ENCODE measurements at regions of chr9 and their contacts with region 1.

Region 1: GRCh38 chr9:134099123-134099787 is 31.4 kb upstream of the BRD3 start:
- DNase-seq: peak; percentile 44 to 67 (median 54)
- H3K4me3 ChIP-seq: no peak overlapping the region
- H3K4me3 Mint-ChIP-seq: peak overlapping the region in 1 of 2 donors; percentile 35
- H3K27ac ChIP-seq: no peak overlapping the region
- H3K27ac Mint-ChIP-seq: peak overlapping the region in 1 of 7 donors; percentile 54
- H3K4me1 ChIP-seq: peaks cover 0 to 6% of the 10 kb centered on the region in 2 donors
- H3K4me1 Mint-ChIP-seq: peaks cover 7% of the 10 kb centered on the region
- H3K27me3 ChIP-seq: no peaks in the 10 kb centered on the region
- H3K27me3 Mint-ChIP-seq: peaks cover 12 to 16% (median 14%) of the 10 kb centered on the region in 3 donors
- CTCF ChIP-seq: peak; percentile 91

Region 2: GRCh38 chr9:133067821-133068220 is 1031.4 kb before region 1 on chr9:
- intact Hi-C with region 1: no loop called
- DNase-seq: no peak
- H3K4me3 ChIP-seq: no peak overlapping the region
- H3K4me3 Mint-ChIP-seq: no peak overlapping the region
- H3K27ac ChIP-seq: no peak overlapping the region
- H3K27ac Mint-ChIP-seq: peak overlapping the region in 1 of 7 donors; percentile 20
- H3K4me1 ChIP-seq: no peaks in the 10 kb centered on the region
- H3K4me1 Mint-ChIP-seq: no peaks in the 10 kb centered on the region
- H3K27me3 ChIP-seq: no peaks in the 10 kb centered on the region
- H3K27me3 Mint-ChIP-seq: peaks cover 0 to 1% (median 0%) of the 10 kb centered on the region in 3 donors
- CTCF ChIP-seq: no peak

Region 3: GRCh38 chr9:133782157-133783130 is 316.8 kb before region 1 on chr9:
- intact Hi-C with region 1: loop called in 1 of 2 experiments (anchors 5 kb)
- DNase-seq: peak; percentile 61 to 63 (median 63)
- H3K4me3 ChIP-seq: no peak overlapping the region
- H3K4me3 Mint-ChIP-seq: no peak overlapping the region
- H3K27ac ChIP-seq: no peak overlapping the region
- H3K27ac Mint-ChIP-seq: peak overlapping the region in 2 of 7 donors; percentile 15 to 24
- H3K4me1 ChIP-seq: peaks cover 29 to 39% of the 10 kb centered on the region in 2 donors
- H3K4me1 Mint-ChIP-seq: peaks cover 40% of the 10 kb centered on the region
- H3K27me3 ChIP-seq: no peaks in the 10 kb centered on the region
- H3K27me3 Mint-ChIP-seq: peaks cover 0 to 2% (median 2%) of the 10 kb centered on the region in 3 donors
- CTCF ChIP-seq: peak; percentile 79

Region 4: DNA sequence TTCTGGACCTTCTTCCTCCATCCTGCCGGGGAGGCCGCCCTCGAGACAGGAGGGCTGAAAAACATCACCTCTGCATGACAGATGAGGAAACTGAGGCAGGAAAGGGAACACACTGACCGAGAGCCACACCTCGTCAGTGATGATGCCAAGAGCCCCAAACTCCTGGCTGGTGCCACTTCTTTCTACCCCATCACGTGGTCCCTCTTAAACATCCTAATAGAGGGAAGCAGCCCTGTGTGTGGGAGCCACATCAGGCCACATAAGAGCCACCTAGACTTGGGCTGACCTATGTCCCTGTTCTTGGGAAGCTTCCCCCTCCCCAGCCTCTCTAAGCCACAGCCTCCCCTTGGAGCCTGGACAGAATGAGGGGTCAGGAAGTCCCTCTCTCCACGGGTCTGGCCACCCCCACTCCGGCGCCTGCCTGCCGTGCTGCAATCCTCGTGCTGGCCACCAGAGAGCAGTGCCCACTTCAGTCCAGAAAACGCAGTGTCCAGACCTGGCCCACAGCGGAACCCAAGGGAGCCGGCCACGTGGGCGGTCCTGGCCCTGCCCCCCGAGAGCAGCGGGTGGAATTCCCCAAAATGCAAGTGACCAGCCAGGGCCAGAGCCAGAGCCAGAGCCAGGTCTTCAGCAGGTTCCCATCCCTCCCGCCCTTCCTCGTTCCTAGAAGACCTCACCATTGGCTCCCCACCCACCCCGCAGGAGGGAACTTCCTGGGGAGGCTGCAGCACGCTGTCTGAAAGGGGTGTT is 306.4 kb before region 1 on chr9:
- intact Hi-C with region 1: loop called in 1 of 2 experiments (anchors 5 kb)
- DNase-seq: peak; percentile 83 to 95 (median 87)
- H3K4me3 ChIP-seq: peak overlapping the region in 2 of 3 experiments; percentile 14 to 52
- H3K4me3 Mint-ChIP-seq: peak overlapping the region; percentile 58 to 75
- H3K27ac ChIP-seq: peak overlapping the region; percentile 1 to 53
- H3K27ac Mint-ChIP-seq: peak overlapping the region; percentile 30 to 90 (median 65)
- H3K4me1 ChIP-seq: peaks cover 31 to 42% of the 10 kb centered on the region in 2 donors
- H3K4me1 Mint-ChIP-seq: peaks cover 44% of the 10 kb centered on the region
- H3K27me3 ChIP-seq: no peaks in the 10 kb centered on the region
- H3K27me3 Mint-ChIP-seq: peaks cover 1 to 13% (median 5%) of the 10 kb centered on the region in 3 donors
- CTCF ChIP-seq: peak; percentile 95

Region 5: GRCh38 chr9:134152022-134152448 is 52.8 kb after region 1 on chr9:
- intact Hi-C with region 1: no loop called
- DNase-seq: no peak
- H3K4me3 ChIP-seq: no peak overlapping the region
- H3K4me3 Mint-ChIP-seq: no peak overlapping the region
- H3K27ac ChIP-seq: no peak overlapping the region
- H3K27ac Mint-ChIP-seq: peak overlapping the region in 2 of 7 donors; percentile 8 to 14
- H3K4me1 ChIP-seq: no peaks in the 10 kb centered on the region
- H3K4me1 Mint-ChIP-seq: no peaks in the 10 kb centered on the region
- H3K27me3 ChIP-seq: no peaks in the 10 kb centered on the region
- H3K27me3 Mint-ChIP-seq: no peaks in the 10 kb centered on the region
- CTCF ChIP-seq: no peak